ENCODE measurements at regions of chr6 and their contacts with region 1.

Region 1: DNA sequence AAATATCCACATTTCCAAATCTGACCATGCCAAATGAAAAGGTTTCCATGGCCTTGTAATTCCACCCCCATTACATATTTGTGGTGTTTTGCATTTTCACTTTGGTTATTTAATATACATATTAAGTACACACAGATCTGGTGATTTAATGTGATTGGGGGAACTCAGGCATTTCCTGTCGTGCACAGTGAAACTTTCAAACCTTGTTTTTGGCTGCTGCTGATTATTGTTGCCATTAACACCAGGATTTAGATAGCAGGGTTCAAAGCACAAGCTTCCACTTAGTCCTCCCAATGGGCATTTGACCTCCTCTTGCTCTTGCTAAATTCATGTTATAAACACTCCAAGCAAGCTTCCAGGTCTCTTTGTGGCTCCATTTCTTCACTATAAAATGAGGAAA is 166.5 kb downstream of the SOBP start:
- DNase-seq: no peak
- H3K4me3 ChIP-seq: no peak overlapping the region
- H3K4me3 Mint-ChIP-seq: peak overlapping the region in 2 of 7 donors; percentile 85 to 88
- H3K27ac ChIP-seq: no peak overlapping the region
- H3K27ac Mint-ChIP-seq: peak overlapping the region in 4 of 8 donors; percentile 21 to 79 (median 76)
- H3K4me1 ChIP-seq: peaks cover 24% of the 10 kb centered on the region
- H3K4me1 Mint-ChIP-seq: peaks cover 34 to 39% (median 37%) of the 10 kb centered on the region in 3 donors
- H3K27me3 ChIP-seq: no peaks in the 10 kb centered on the region
- H3K27me3 Mint-ChIP-seq: peaks cover 0 to 5% of the 10 kb centered on the region in 2 donors

Region 2: DNA sequence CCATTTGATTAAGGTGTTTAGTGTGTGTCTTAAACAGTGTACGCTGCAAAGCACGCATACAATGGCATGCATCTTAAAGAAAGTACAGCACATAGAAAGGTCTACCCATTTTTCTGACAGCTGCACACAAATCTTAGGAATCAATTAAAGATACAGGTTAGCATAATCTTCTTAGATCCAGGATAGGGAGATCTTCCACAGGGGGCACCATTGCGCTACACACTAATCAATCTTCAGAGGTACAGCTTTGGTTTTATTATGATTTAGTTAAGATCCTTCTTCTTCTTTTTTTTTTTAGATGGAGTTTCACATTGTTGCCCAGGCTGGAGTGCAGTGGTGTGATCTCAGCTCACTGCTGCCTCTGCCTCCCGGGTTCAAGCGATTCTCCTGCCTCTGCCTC is 477.4 kb before region 1 on chr6:
- CTCF ChIA-PET with region 1: no interaction called
- POLR2A ChIA-PET with region 1: interaction called, 11 read pairs
- DNase-seq: no peak
- H3K4me3 ChIP-seq: no peak overlapping the region
- H3K4me3 Mint-ChIP-seq: no peak overlapping the region
- H3K27ac ChIP-seq: no peak overlapping the region
- H3K27ac Mint-ChIP-seq: no peak overlapping the region
- H3K4me1 ChIP-seq: no peaks in the 10 kb centered on the region
- H3K4me1 Mint-ChIP-seq: no peaks in the 10 kb centered on the region
- H3K27me3 ChIP-seq: no peaks in the 10 kb centered on the region
- H3K27me3 Mint-ChIP-seq: no peaks in the 10 kb centered on the region

Measured in CD8-positive, alpha-beta memory T cell (primary cell).